Mammary epithelial cell (primary cell): ENCODE measurements at regions of chrX and their contacts with region 1.

Region 1: DNA sequence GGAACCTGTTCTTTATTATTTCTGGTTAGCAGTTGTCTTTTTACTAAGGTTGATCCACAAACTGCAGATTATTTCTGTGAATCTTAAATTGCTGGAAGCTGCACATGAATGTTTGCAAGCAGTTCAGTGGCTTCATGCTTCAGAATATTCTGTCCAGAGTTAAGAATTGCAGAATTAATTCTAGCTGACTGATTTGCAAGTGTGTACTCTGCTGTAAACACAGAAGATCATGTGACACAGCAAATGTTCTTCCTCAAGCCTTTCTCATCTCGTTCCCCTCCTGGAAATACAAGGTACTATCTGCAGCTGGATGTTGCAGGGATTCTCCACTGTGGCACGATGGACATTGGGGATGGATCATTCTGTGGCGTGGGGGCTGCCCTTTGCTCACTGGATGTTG is 16.8 kb upstream of the CLTRN start:
- DNase-seq: no peak
- H3K4me3 ChIP-seq: no peak overlapping the region
- H3K27ac ChIP-seq: no peak overlapping the region
- H3K4me1 ChIP-seq: peaks cover 20% of the 10 kb centered on the region
- H3K27me3 ChIP-seq: no peaks in the 10 kb centered on the region
- CTCF ChIP-seq: no peak

Region 2: DNA sequence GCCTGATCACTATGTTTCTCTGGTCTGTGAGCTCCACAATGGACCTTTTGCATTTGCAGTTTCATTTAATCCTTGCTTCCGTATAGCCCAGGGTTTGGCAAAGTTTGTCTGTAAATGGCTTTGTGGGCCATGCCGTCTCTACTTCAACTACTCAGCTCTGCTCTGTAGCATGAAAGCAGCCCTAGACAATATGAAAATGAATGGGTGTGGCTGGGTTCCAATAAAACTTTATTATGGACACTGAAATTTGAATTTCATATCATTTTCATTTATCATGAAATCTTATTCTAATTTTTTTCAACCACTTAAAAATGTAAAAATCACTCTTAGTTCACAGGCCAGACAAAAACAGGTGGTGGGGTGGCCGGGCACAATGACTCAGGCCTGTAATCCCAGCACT is 122.2 kb before region 1 on chrX:
- CTCF ChIA-PET with region 1: no interaction called
- dilution Hi-C with region 1: no loop called
- in situ Hi-C with region 1: no loop called
- intact Hi-C with region 1: no loop called
- DNase-seq: no peak
- H3K4me3 ChIP-seq: no peak overlapping the region
- H3K27ac ChIP-seq: no peak overlapping the region
- H3K4me1 ChIP-seq: no peaks in the 10 kb centered on the region
- H3K27me3 ChIP-seq: no peaks in the 10 kb centered on the region
- CTCF ChIP-seq: no peak

Region 3: DNA sequence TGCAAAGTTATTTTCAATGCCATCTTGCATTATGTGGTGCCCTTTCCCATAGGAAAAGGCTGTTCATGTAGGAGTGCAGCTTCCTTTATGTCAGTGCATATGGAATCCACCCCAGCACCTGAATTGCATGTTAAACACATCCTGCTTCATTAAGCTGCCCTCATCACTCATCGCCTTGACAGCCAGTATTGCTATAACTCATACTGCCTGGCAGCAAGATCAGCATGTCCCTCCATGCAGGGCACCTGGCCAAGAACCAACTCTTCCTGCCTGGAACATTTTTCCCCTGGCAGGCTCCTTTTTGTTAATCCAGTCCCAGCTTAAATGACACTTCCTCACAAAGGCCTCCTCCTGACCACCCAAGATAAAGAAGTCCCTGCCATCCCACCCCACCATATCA is 33.1 kb after region 1 on chrX:
- CTCF ChIA-PET with region 1: no interaction called
- dilution Hi-C with region 1: no loop called
- in situ Hi-C with region 1: no loop called
- intact Hi-C with region 1: loop called (anchors 1 kb)
- DNase-seq: peak; percentile 45
- H3K4me3 ChIP-seq: no peak overlapping the region
- H3K27ac ChIP-seq: no peak overlapping the region
- H3K4me1 ChIP-seq: peaks cover 10% of the 10 kb centered on the region
- H3K27me3 ChIP-seq: no peaks in the 10 kb centered on the region
- CTCF ChIP-seq: no peak